H1 (cell line): ENCODE measurements at regions of chr12 and their contacts with region 1.

Region 1: GRCh38 chr12:57611108-57611809 is at the start of gene ARHGEF25:
- DNase-seq: peak in 1 of 2 experiments; percentile 83
- H3K4me3 ChIP-seq: peak within 1 kb of the TSS; percentile 50 to 73 (median 56)
- H3K27ac ChIP-seq: no peak within 1 kb of the TSS
- H3K4me1 ChIP-seq: peaks cover 8 to 17% (median 12%) of the 10 kb centered on the region in 4 experiments
- H3K27me3 ChIP-seq: peaks cover 4 to 59% (median 47%) of the 10 kb centered on the region in 4 experiments
- CTCF ChIP-seq: no peak
- EP300 ChIP-seq: no peak
- POLR2A ChIP-seq: no peak
- RAD21 ChIP-seq: no peak
- total RNA-seq, gene ARHGEF25: 5.9 and 6.4 TPM in 2 replicates

Region 2: GRCh38 chr12:57590536-57591479 is 20.5 kb before region 1 on chr12 and contains the start of gene PIP4K2C:
- CTCF ChIA-PET with region 1: interaction called, 124 read pairs
- POLR2A ChIA-PET with region 1: interaction called, 60 read pairs
- DNase-seq: peak; percentile 81 to 90
- H3K4me3 ChIP-seq: peak within 1 kb of the TSS; percentile 72 to 95 (median 80)
- H3K27ac ChIP-seq: peak within 1 kb of the TSS; percentile 26; the same call in 1 of the 2 replicates
- H3K4me1 ChIP-seq: peaks cover 2 to 7% (median 3%) of the 10 kb centered on the region in 4 experiments; a peak in 6 of 7 replicates
- H3K27me3 ChIP-seq: no peaks in the 10 kb centered on the region
- CTCF ChIP-seq: no peak; a peak in 1 of 4 replicates
- EP300 ChIP-seq: no peak
- POLR2A ChIP-seq: peak; percentile 42 to 67
- RAD21 ChIP-seq: no peak; a peak in 1 of 4 replicates
- total RNA-seq, gene PIP4K2C: 21.4 and 27.1 TPM in 2 replicates

Region 3: GRCh38 chr12:57627501-57628279 is 16.4 kb after region 1 on chr12:
- CTCF ChIA-PET with region 1: interaction called, 41 read pairs
- POLR2A ChIA-PET with region 1: interaction called, 9 read pairs
- DNase-seq: peak in 1 of 2 experiments; percentile 73
- H3K4me3 ChIP-seq: peak overlapping the region; percentile 2 to 53 (median 32); a peak in 5 of 8 replicates
- H3K27ac ChIP-seq: no peak overlapping the region
- H3K4me1 ChIP-seq: peaks cover 0 to 20% (median 16%) of the 10 kb centered on the region in 4 experiments; a peak in 6 of 7 replicates
- H3K27me3 ChIP-seq: peaks cover 92 to 100% (median 99%) of the 10 kb centered on the region in 4 experiments
- CTCF ChIP-seq: peak in 2 of 3 experiments; percentile 35 to 37; a peak in 3 of 4 replicates
- EP300 ChIP-seq: no peak
- POLR2A ChIP-seq: no peak
- RAD21 ChIP-seq: peak; percentile 36 to 41

Region 4: GRCh38 chr12:57632694-57633477 is 21.6 kb after region 1 on chr12 and contains the start of gene B4GALNT1:
- CTCF ChIA-PET with region 1: interaction called, 41 read pairs
- POLR2A ChIA-PET with region 1: interaction called, 9 read pairs
- DNase-seq: peak in 1 of 2 experiments; percentile 85
- H3K4me3 ChIP-seq: peak within 1 kb of the TSS; percentile 43 to 83 (median 54)
- H3K27ac ChIP-seq: no peak within 1 kb of the TSS
- H3K4me1 ChIP-seq: peaks cover 0 to 13% (median 9%) of the 10 kb centered on the region in 4 experiments; a peak in 6 of 7 replicates
- H3K27me3 ChIP-seq: peaks cover 49 to 68% (median 63%) of the 10 kb centered on the region in 4 experiments
- CTCF ChIP-seq: peak in 2 of 3 experiments; percentile 84 to 90; a peak in 3 of 4 replicates
- EP300 ChIP-seq: no peak
- POLR2A ChIP-seq: no peak
- RAD21 ChIP-seq: peak; percentile 44 to 58; a peak in 3 of 4 replicates
- total RNA-seq, gene B4GALNT1: 1.4 and 1.5 TPM in 2 replicates

Region 5: GRCh38 chr12:57735952-57736740 is 124.9 kb after region 1 on chr12:
- CTCF ChIA-PET with region 1: interaction called, 17 read pairs
- POLR2A ChIA-PET with region 1: interaction called, 10 read pairs
- DNase-seq: peak in 1 of 2 experiments; percentile 80
- H3K4me3 ChIP-seq: peak overlapping the region; percentile 19 to 76 (median 30)
- H3K27ac ChIP-seq: no peak overlapping the region
- H3K4me1 ChIP-seq: peaks cover 6 to 29% (median 12%) of the 10 kb centered on the region in 4 experiments; a peak in 6 of 7 replicates
- H3K27me3 ChIP-seq: peaks cover 50 to 97% (median 90%) of the 10 kb centered on the region in 4 experiments
- CTCF ChIP-seq: peak; percentile 60 to 66 (median 64)
- EP300 ChIP-seq: 0 out of 3 replicates have a peak, but pooled peaks of 1 of the 2 experiments have one; percentile 52
- POLR2A ChIP-seq: no peak
- RAD21 ChIP-seq: peak; percentile 73 to 77

Region 6: DNA sequence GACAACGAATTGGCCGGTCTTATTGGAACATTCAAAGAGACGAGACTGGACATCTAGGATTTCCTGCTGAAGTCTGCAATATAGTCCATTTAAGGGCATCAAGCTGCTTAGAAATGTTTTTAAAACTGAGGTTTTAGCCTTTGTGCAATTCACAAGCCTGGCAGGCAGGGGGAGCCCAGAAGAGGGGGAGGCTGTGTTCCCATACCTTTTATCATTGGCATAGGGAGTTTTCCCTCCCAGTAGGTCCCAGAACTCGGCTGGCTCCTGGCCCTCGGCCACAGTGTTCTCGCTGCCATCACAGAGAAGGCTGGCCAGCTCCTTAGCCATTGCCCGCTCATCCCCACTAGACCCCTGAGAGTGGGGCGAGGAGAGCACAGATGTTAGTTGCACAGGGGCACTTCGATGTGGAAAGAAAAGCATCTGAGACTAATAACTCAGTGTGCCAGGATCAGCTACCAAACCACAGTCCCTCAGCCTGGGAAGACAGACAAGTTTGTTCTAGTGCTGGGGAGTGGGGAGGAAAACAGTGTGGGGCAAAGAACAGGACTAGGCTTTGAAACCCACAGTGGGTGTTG is 192.1 kb after region 1 on chr12:
- CTCF ChIA-PET with region 1: no interaction called
- POLR2A ChIA-PET with region 1: no interaction called
- DNase-seq: peak; percentile 31 to 76
- H3K4me3 ChIP-seq: no peak overlapping the region
- H3K27ac ChIP-seq: no peak overlapping the region
- H3K4me1 ChIP-seq: peaks cover 0 to 2% (median under 1%) of the 10 kb centered on the region in 4 experiments; a peak in 1 of 7 replicates
- H3K27me3 ChIP-seq: no peaks in the 10 kb centered on the region
- CTCF ChIP-seq: peak; percentile 73 to 92 (median 78)
- EP300 ChIP-seq: no peak
- POLR2A ChIP-seq: no peak
- RAD21 ChIP-seq: peak; percentile 64 to 72